ENCODE measurements at regions of chr2 and their contacts with region 1.

Region 1: DNA sequence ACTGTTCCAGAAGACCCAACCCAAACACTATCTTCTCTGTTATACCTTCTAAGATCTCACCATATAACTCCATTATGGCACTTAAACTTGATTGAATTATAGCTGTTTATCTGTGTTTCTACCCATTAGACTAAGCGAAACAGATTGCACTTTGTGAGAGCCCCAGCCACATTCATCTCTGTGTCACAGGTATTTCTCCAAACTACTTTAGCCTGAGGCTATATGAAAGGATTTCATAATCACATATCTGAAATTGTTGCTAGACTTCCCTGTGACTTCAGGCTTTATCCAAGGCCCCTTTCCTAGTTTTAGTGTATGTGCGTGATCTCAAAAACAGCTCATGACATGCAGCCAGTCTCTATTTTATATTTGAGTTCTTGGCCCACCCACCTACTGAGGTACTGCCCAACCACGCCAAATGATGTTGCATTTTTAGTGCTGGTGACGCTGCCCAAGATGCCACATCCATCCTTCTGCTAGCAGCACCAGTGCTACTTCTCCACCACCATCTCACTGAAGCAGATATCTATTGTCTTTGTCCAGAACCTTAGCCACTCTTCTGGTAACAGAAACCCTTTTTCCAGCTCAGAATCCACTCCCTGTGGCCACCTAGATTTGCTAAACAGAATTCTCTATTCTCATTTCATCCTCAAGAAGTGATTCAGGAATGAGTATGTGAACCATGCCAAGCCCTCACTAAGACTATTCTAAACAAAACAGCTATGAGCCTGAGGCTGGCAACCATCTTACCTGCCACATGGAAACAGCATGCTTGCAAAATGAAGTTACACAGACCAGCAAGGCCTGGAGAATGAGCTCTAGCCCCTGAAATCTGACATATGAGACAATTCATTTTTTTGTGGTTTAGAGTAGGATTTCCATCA is 744.8 kb upstream of the ACVR2A start:
- DNase-seq: no peak
- ATAC-seq: no peak
- H3K4me3 ChIP-seq: no peak overlapping the region
- H3K27ac ChIP-seq: no peak overlapping the region
- H3K4me1 ChIP-seq: no peaks in the 10 kb centered on the region
- H3K27me3 ChIP-seq: peaks cover 0 to 5% (median 0%) of the 10 kb centered on the region in 9 donors
- CTCF ChIP-seq: no peak
- POLR2A ChIP-seq: no peak

Region 2: GRCh38 chr2:147110317-147110716 is 10.2 kb after region 1 on chr2:
- intact Hi-C with region 1: loop called in 1 of 10 experiments (anchors 1 kb)
- DNase-seq: no peak
- ATAC-seq: no peak
- H3K4me3 ChIP-seq: no peak overlapping the region
- H3K27ac ChIP-seq: no peak overlapping the region
- H3K4me1 ChIP-seq: no peaks in the 10 kb centered on the region
- H3K27me3 ChIP-seq: no peaks in the 10 kb centered on the region
- CTCF ChIP-seq: no peak
- POLR2A ChIP-seq: no peak

Measured in heart left ventricle (tissue), 16 donors.